ENCODE measurements at regions of chr18 and their contacts with region 1.

Region 1: DNA sequence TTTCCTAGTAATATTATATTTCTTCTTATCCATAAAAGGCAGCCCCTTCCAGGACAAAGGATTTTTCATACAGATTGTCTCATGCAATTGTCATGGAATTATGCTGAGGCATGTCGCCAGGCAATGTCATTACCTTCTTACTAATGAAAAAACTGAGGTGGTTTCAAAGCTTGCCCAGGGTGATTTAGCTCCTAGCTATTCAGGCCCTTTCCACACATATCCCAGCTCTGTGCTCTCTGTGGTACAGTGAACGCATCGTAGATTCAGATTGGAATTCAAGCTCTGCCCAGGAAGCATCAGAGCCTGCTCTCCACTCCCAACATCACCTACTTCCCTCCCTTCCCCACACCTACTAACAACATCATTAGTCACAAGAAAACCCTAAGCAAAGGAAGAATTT is 60.1 kb downstream of the ATP8B1 start:
- DNase-seq: no peak
- ATAC-seq: no peak

Region 2: DNA sequence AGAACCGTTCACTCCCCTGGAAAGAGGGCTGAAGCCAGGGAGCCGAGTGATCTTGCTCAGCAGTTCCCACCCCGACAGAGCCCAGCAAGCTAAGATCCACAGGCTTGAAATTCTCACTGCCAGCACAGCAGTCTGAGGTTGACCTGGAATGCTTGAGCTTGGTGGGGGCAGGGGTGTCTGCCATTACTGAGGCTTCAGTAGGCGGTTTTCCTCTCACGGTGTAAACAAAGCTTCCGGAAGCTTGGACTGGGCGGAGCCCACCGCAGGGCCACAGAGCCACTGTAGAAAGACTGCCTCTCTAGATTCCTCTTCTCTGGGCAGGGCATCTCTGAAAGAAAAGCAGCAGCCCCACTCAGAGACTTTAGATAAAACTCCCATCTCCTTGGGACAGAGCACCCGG is 911.0 kb before region 1 on chr18:
- intact Hi-C with region 1: loop called (anchors 5 kb)
- DNase-seq: no peak
- ATAC-seq: no peak